ENCODE measurements at regions of chr12 and their contacts with region 1.

Region 1: GRCh38 chr12:89352492-89353187 is at the start of gene DUSP6:
- DNase-seq: peak; percentile 64 to 93 (median 75)
- ATAC-seq: peak; percentile 76
- H3K4me3 ChIP-seq: peak within 1 kb of the TSS; percentile 78
- H3K4me3 Mint-ChIP-seq: peak within 1 kb of the TSS; percentile 94
- H3K27ac ChIP-seq: peak within 1 kb of the TSS in 1 of 2 donors; percentile 65
- H3K27ac Mint-ChIP-seq: peak within 1 kb of the TSS; percentile 88
- H3K4me1 ChIP-seq: peaks cover 51% of the 10 kb centered on the region
- H3K4me1 Mint-ChIP-seq: peaks cover 45% of the 10 kb centered on the region
- H3K27me3 ChIP-seq: no peaks in the 10 kb centered on the region
- H3K27me3 Mint-ChIP-seq: no peaks in the 10 kb centered on the region
- CTCF ChIP-seq: no peak
- total RNA-seq, gene DUSP6: 11.8 to 14.7 TPM

Region 2: DNA sequence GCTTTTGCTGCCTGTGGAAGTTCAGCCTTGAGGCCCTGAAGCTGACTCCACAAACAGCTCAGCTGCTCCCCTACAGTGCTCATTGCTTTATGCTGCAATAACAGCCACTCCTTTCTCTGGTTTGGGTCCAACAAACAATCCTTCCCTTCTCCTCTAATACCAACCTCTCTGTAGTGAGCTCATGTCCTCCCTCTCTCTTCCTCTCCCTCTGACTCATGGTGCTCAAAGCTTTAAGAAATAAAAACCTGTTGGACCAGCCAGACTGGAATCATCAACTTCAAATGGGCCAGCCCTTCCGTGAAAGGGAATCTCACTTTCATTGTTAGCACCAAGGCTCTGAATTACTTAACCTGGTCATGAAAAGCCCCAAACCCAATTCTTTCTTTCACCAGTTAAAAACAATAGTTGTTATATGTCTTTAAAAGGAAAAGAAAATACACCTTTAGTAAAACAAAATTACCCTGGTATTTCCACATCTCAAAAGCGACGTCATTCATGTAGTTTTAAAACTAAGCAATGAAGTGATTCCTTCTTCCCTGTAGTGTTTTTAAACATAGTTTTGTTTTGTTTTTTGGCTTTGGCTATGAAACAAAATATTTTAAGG is 126.7 kb before region 1 on chr12:
- CTCF ChIA-PET with region 1: no interaction called
- POLR2A ChIA-PET with region 1: interaction called, 6 read pairs
- intact Hi-C with region 1: loop called in 1 of 2 experiments (anchors 5 kb)
- DNase-seq: peak in 2 of 14 experiments; percentile 24 to 33
- ATAC-seq: peak; percentile 31
- H3K4me3 ChIP-seq: no peak overlapping the region
- H3K4me3 Mint-ChIP-seq: no peak overlapping the region
- H3K27ac ChIP-seq: peak overlapping the region in 1 of 2 donors; percentile 10
- H3K27ac Mint-ChIP-seq: peak overlapping the region; percentile 54
- H3K4me1 ChIP-seq: peaks cover 24% of the 10 kb centered on the region
- H3K4me1 Mint-ChIP-seq: peaks cover 39% of the 10 kb centered on the region
- H3K27me3 ChIP-seq: no peaks in the 10 kb centered on the region
- H3K27me3 Mint-ChIP-seq: no peaks in the 10 kb centered on the region
- CTCF ChIP-seq: no peak

Region 3: DNA sequence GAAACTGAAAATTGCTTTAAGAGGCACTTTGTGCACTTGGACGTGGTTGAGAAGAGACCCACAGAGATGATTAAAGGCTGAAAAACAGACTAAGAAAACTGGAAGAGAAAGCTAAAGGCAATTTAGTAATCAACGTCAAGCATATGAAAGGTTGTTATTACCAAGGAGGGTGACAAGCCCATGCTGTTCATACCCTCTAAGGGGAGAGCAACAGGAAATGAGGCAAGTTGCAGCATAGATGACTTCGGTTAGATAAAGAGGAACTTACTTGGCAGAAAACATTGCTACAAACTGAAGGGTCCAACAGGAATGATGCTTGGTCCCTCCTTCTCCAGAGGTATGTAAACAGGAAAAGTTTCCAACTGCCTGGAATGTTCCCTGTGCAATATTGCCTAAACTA is 108.1 kb before region 1 on chr12:
- CTCF ChIA-PET with region 1: no interaction called
- POLR2A ChIA-PET with region 1: interaction called, 31 read pairs
- intact Hi-C with region 1: loop called (anchors 2 to 5 kb)
- DNase-seq: peak in 4 of 14 experiments; percentile 12 to 57 (median 44)
- ATAC-seq: peak; percentile 59
- H3K4me3 ChIP-seq: no peak overlapping the region
- H3K4me3 Mint-ChIP-seq: peak overlapping the region; percentile 4
- H3K27ac ChIP-seq: no peak overlapping the region
- H3K27ac Mint-ChIP-seq: peak overlapping the region; percentile 74
- H3K4me1 ChIP-seq: peaks cover 22% of the 10 kb centered on the region
- H3K4me1 Mint-ChIP-seq: peaks cover 46% of the 10 kb centered on the region
- H3K27me3 ChIP-seq: no peaks in the 10 kb centered on the region
- H3K27me3 Mint-ChIP-seq: no peaks in the 10 kb centered on the region
- CTCF ChIP-seq: no peak

Region 4: GRCh38 chr12:89393551-89394121 is 41.0 kb after region 1 on chr12:
- CTCF ChIA-PET with region 1: no interaction called
- POLR2A ChIA-PET with region 1: no interaction called
- intact Hi-C with region 1: loop called in 1 of 2 experiments (anchors 2 kb)
- DNase-seq: no peak
- ATAC-seq: no peak
- H3K4me3 ChIP-seq: no peak overlapping the region
- H3K4me3 Mint-ChIP-seq: no peak overlapping the region
- H3K27ac ChIP-seq: no peak overlapping the region
- H3K27ac Mint-ChIP-seq: no peak overlapping the region
- H3K4me1 ChIP-seq: peaks cover 15% of the 10 kb centered on the region
- H3K4me1 Mint-ChIP-seq: peaks cover 33% of the 10 kb centered on the region
- H3K27me3 ChIP-seq: no peaks in the 10 kb centered on the region
- H3K27me3 Mint-ChIP-seq: no peaks in the 10 kb centered on the region
- CTCF ChIP-seq: no peak

Region 5: DNA sequence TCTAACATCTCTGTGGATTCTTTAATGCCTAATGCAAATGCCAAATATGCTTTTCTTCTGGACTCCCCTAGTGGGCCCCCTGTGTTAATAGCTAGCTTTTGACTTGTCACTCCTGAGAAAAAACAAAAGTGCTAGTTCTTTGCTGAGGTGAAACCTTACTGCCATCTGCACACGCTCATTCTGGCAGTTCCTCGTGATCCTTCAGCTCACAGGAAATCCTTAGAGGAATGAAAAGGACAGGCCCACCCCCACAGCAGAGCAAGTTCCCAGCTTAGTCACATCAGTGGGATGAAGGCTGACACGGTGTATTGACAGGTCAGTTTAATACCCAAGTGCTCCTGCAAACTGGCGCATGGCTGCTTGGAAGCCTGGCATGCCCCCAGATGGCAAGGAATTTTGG is 521.1 kb after region 1 on chr12:
- CTCF ChIA-PET with region 1: no interaction called
- POLR2A ChIA-PET with region 1: no interaction called
- intact Hi-C with region 1: loop called in 1 of 2 experiments (anchors 10 kb)
- DNase-seq: no peak
- ATAC-seq: no peak
- H3K4me3 ChIP-seq: no peak overlapping the region
- H3K4me3 Mint-ChIP-seq: no peak overlapping the region
- H3K27ac ChIP-seq: no peak overlapping the region
- H3K27ac Mint-ChIP-seq: no peak overlapping the region
- H3K4me1 ChIP-seq: no peaks in the 10 kb centered on the region
- H3K4me1 Mint-ChIP-seq: peaks cover 19% of the 10 kb centered on the region
- H3K27me3 ChIP-seq: no peaks in the 10 kb centered on the region
- H3K27me3 Mint-ChIP-seq: no peaks in the 10 kb centered on the region
- CTCF ChIP-seq: no peak

Measured in CD4-positive, alpha-beta T cell (primary cell).